ENCODE measurements at regions of chr18 and their contacts with region 1.

Region 1: DNA sequence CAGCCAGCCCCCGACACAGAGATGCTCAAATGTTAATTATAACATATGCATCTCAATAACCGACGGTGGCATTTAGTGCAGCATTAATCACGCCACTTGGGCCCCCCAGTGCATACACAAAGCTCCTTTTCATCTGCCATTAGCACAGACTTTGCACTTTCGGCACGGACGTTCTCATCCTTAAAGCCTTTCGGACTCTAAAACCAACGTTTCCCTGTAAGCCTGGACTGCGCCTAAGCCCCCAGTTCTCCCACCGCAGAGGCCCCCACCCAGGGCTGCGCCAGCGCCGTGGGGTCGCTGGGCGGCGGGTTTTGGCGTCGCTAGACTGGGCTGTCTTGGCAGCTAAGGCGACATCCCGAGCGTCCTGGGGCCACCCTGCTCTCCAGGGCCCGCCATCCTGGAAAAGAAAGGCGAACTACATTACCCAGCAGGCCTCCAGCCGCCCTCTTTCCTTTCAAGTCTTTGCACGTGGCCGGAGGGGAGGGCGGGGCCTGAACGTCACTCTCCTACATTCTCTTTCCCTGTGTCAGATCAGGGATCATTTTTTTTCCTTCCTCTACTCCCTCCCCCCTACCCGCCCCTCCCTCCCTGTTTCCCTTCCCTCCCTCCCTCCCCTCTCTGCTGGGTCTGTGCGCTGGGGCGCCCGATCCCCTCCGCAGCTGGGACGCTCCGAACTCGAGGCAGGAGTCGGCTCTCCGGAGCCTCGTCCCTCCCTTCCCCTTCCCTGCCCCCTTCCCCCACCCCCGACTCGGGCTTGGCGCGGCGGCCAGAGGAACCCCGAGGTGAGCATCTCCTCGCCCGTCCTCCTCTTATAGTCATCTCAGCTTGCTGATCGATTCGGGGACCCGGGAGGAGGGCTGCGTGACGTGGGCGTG is at the start of gene CTIF:
- DNase-seq: peak; percentile 93 to 97
- ATAC-seq: peak; percentile 89 to 94 (median 91)
- H3K4me3 ChIP-seq: peak within 1 kb of the TSS; percentile 72 to 90 (median 88)
- H3K27ac ChIP-seq: peak within 1 kb of the TSS; percentile 89 to 97 (median 95)
- H3K4me1 ChIP-seq: peaks cover 3 to 34% (median 24%) of the 10 kb centered on the region in 9 donors
- H3K27me3 ChIP-seq: no peaks in the 10 kb centered on the region
- CTCF ChIP-seq: peak in 3 of 9 donors; percentile 7 to 15 (median 14)
- total RNA-seq, gene CTIF: 44.5 to 68.9 (median 58.9) TPM

Region 2: DNA sequence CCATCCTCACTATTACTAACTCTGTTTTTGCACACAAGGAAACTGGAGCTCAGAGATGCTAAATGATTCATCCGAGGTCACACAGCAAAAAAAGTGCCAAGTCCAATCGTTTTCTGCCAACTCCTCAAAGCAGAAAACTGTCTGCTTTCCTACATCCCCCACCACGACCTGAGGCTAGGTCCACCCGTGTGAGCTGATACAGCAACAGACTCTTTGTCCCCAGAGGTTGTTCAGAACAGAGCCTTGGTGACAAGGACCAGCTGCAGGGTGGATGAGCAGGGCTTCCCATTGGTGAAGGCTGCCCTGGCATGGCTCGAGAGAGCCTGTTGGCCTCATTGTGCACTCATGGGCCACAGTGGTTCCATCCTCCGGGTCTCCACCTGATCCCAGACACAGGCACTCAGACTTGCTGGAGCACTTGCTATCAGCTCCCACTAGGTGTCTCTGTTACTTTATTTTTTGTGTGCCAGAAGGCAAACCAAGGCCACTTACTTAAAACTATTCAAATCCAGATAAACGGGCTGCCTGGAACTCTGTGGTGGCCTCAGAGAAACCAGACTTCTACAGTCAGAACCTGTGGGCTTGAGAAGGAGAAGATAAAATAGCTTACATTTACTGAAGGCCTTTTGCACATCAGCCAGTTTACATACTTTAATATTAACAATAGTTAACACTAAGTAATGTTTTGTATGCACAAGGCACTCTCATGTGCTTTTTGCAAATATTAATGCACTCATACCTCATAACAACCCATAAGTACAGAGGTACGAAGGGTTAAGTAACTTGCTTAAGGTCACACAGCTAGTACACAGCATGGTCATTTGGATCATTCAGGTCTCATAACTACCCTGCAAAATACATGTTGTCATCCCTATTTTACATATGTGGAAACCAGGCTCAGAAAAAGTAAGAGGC is 62.9 kb before region 1 on chr18:
- intact Hi-C with region 1: loop called in 2 of 10 experiments (anchors 5 to 10 kb)
- DNase-seq: peak in 1 of 2 donors; percentile 66
- ATAC-seq: peak; percentile 69 to 94 (median 90)
- H3K4me3 ChIP-seq: no peak overlapping the region
- H3K27ac ChIP-seq: no peak overlapping the region
- H3K4me1 ChIP-seq: peaks cover 0 to 12% (median 5%) of the 10 kb centered on the region in 9 donors
- H3K27me3 ChIP-seq: no peaks in the 10 kb centered on the region
- CTCF ChIP-seq: peak; percentile 62 to 91 (median 85)

Region 3: DNA sequence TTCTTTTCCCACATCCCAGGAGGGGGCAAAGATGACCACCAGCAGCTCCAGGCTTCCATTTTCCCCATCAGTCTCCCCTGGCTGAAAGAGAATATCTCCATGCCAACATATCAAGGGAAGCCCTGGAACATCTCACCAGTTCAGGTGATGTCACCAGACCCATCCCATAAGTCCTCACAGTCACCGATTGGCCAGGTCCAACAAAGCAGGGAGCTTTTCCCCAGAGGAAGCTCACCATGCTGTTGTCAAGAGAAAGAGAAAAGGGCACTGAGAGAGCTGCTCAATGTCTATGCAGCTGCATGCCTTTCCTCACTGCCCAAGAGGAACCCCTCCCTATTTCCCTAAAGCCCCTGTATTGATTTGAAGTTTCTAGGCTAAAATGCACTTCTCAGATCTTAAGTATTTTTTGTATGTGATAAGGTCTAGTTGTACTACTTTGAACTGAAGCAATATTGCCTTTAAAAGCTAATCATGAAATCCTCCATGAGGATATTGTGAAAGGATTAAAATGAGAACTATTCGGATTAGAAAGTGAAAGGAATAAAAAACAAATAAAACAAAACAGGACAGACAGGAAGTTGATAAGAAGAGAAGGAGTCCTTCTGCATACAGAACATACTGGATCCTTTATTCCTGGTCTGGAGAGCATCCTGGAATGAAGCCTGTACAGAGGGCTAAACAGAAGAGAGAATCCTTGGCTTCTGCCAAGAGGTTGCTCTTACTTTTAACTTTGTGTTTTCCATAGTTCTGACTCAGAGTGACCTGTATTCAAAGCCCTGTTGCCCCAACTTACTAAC is 45.1 kb before region 1 on chr18:
- intact Hi-C with region 1: loop called in 4 of 10 experiments (anchors 5 to 10 kb)
- DNase-seq: no peak
- ATAC-seq: peak in 2 of 8 donors; percentile 45 to 56
- H3K4me3 ChIP-seq: no peak overlapping the region
- H3K27ac ChIP-seq: peak overlapping the region in 2 of 10 donors; percentile 0 to 40
- H3K4me1 ChIP-seq: peaks cover 0 to 31% (median 17%) of the 10 kb centered on the region in 9 donors
- H3K27me3 ChIP-seq: peaks cover 0 to 2% (median 0%) of the 10 kb centered on the region in 7 donors
- CTCF ChIP-seq: no peak

Region 4: DNA sequence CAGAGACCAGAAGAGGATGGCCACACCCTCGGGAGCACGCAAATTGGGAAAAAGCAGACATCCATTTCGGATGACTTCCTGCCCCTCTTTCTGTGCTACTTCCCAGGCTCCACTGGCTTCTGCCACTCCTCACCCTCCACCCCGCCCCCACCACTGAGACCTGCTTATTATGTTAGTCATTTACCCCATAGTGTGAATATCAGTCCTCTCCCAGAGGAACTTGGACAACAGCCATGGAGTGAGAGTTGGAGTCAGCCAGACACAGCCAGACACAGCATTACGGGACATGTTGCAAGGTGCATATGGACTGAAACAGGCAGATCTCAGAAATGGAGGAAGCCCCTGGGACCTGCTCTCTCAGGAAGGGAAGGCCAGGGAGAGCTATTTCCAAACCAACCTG is 51.9 kb after region 1 on chr18:
- intact Hi-C with region 1: loop called in 1 of 10 experiments (anchors 5 kb)
- DNase-seq: no peak
- ATAC-seq: peak in 6 of 8 donors; percentile 6 to 62 (median 36)
- H3K4me3 ChIP-seq: no peak overlapping the region
- H3K27ac ChIP-seq: peak overlapping the region in 9 of 10 donors; percentile 19 to 86 (median 74)
- H3K4me1 ChIP-seq: peaks cover 6 to 64% (median 31%) of the 10 kb centered on the region in 9 donors
- H3K27me3 ChIP-seq: no peaks in the 10 kb centered on the region
- CTCF ChIP-seq: no peak

Region 5: GRCh38 chr18:48613589-48614404 is 75.0 kb after region 1 on chr18:
- intact Hi-C with region 1: loop called in 2 of 10 experiments (anchors 5 kb)
- DNase-seq: peak in 1 of 2 donors; percentile 52
- ATAC-seq: peak in 7 of 8 donors; percentile 26 to 61 (median 42)
- H3K4me3 ChIP-seq: no peak overlapping the region
- H3K27ac ChIP-seq: peak overlapping the region in 2 of 10 donors; percentile 19 to 59
- H3K4me1 ChIP-seq: peaks cover 12 to 77% (median 56%) of the 10 kb centered on the region in 9 donors
- H3K27me3 ChIP-seq: no peaks in the 10 kb centered on the region
- CTCF ChIP-seq: no peak

Measured in heart right ventricle (tissue), 16 donors.